ENCODE measurements at regions of chr4 and their contacts with region 1.

Region 1: DNA sequence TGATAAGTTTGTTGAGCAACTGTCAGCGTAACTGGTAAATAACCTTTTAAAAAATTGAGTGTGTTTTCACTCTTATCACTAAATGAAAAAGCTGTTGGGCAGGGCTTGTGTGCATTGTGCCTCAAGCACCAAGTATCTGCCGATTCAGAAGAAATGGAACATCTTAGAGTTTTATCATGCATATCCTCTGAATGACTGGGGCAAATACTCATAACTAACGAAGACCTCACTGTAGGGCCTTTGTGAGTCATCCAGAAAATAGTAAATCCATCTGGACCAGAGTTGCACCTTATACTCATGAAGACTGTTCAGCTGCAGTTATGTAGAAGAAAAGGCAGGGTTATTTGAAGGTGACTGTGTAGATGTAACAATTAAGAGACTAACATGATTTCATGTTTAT is 222.1 kb downstream of the CAMK2D start:
- DNase-seq: peak; percentile 46
- H3K4me3 Mint-ChIP-seq: no peak overlapping the region
- H3K27ac Mint-ChIP-seq: peak overlapping the region; percentile 65
- H3K4me1 Mint-ChIP-seq: peaks cover 38% of the 10 kb centered on the region
- H3K27me3 Mint-ChIP-seq: no peaks in the 10 kb centered on the region

Region 2: GRCh38 chr4:113355550-113356371 is 183.6 kb before region 1 on chr4:
- CTCF ChIA-PET with region 1: no interaction called
- POLR2A ChIA-PET with region 1: interaction called, 4 read pairs
- intact Hi-C with region 1: loop called (anchors 1 kb)
- DNase-seq: peak; percentile 88
- H3K4me3 Mint-ChIP-seq: peak overlapping the region; percentile 36
- H3K27ac Mint-ChIP-seq: peak overlapping the region; percentile 92
- H3K4me1 Mint-ChIP-seq: peaks cover 39% of the 10 kb centered on the region
- H3K27me3 Mint-ChIP-seq: peaks cover 45% of the 10 kb centered on the region

Region 3: DNA sequence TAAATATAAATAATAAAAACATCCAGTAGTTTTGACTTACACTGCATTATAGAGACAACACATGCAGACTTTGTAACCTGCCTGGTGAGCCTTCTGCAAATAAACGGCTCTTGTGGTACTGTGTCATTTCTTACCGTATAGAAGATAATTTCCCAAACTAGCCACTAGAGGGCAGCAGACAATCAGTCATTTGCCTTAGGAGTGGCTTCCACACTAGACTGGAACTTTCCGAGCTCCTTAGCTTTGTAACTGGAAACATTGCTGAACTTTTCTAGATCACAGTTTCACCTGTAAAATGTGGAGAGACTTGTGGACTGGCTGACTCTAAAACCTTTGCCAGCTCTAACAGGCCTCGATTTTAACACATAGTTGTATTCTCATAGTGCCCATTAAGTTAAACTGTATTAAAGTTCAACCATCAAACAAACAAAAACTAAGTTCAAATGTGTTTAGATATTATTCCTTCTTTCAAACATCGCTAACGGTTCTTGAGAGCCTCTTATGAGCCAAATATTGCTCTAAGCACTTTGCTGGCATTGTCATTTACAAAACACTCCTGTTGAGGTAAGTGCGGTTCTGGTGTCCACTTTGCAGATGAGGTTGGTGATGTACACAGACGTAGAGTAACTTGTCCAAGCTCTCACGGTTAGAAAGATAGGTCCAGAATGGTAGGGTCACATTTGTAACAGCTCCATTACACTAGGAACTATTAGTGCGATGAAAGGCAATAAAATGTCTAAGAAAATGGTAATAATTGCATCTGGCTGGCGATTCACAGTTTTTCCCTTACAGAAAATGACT is 144.5 kb before region 1 on chr4:
- CTCF ChIA-PET with region 1: interaction called, 3 read pairs
- POLR2A ChIA-PET with region 1: no interaction called
- intact Hi-C with region 1: loop called (anchors 2 kb)
- DNase-seq: peak; percentile 43
- H3K4me3 Mint-ChIP-seq: no peak overlapping the region
- H3K27ac Mint-ChIP-seq: no peak overlapping the region
- H3K4me1 Mint-ChIP-seq: peaks cover 6% of the 10 kb centered on the region
- H3K27me3 Mint-ChIP-seq: peaks cover 2% of the 10 kb centered on the region

Region 4: DNA sequence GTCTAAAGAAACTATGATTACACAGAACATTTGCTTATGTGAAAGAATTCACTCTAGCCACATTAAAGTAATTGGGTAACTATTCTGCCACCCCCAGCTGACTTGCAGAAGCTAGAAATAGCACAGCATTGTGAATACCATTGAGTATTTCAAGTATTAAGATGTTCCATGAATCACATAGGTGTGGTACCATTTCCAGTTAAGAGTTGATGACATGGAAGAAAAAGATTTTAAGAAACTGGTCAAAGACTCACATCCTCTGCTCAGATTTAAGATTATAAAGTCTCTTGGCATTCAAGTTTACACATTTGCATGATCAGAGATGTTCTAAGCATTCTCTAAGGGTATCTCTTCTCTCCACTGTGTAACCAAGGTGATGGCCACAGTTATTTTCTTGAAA is 65.4 kb before region 1 on chr4:
- CTCF ChIA-PET with region 1: no interaction called
- POLR2A ChIA-PET with region 1: no interaction called
- intact Hi-C with region 1: loop called (anchors 1 kb)
- DNase-seq: peak; percentile 39
- H3K4me3 Mint-ChIP-seq: no peak overlapping the region
- H3K27ac Mint-ChIP-seq: peak overlapping the region; percentile 84
- H3K4me1 Mint-ChIP-seq: peaks cover 51% of the 10 kb centered on the region
- H3K27me3 Mint-ChIP-seq: no peaks in the 10 kb centered on the region

Region 5: DNA sequence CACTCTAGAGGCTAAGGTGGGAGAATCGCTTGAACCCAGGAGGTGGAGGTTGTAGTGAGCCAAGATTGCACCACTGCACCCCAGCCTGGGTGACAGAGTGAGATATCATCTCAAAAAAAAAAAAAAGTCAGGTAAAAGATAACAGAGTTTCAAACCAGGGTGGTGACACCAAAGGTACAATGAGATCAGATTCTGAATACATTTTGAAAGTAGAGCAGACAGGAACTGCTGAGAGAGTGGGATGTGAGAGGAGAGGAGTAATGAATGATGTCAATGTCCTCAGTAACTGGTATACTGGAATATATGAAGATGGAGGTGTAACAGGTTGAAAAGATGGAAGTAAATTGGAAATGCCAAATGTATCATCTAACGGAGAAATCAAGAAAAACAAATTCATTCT is 86.5 kb after region 1 on chr4:
- CTCF ChIA-PET with region 1: no interaction called
- POLR2A ChIA-PET with region 1: no interaction called
- intact Hi-C with region 1: loop called (anchors 1 kb)
- DNase-seq: peak; percentile 36
- H3K4me3 Mint-ChIP-seq: no peak overlapping the region
- H3K27ac Mint-ChIP-seq: peak overlapping the region; percentile 13
- H3K4me1 Mint-ChIP-seq: peaks cover 45% of the 10 kb centered on the region
- H3K27me3 Mint-ChIP-seq: no peaks in the 10 kb centered on the region

Region 6: DNA sequence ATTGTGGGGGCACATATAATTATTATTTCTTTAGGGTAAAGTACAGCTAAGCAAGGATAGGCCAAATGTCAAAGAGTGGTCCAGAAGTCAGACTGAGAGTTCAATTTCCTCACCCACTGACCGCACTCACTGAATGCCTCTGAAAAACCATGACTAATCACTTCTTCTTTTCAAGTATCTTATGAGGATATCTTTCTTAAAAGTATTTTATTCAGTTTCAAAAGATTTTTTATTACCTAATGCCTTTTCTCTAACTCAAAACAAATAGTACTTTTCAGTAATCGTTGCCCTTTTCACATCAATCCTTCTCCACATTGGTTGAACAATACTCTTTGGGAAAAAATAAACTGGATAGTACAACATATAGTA is 283.9 kb after region 1 on chr4:
- CTCF ChIA-PET with region 1: no interaction called
- POLR2A ChIA-PET with region 1: no interaction called
- intact Hi-C with region 1: loop called (anchors 1 kb)
- DNase-seq: peak; percentile 18
- H3K4me3 Mint-ChIP-seq: no peak overlapping the region
- H3K27ac Mint-ChIP-seq: no peak overlapping the region
- H3K4me1 Mint-ChIP-seq: peaks cover 45% of the 10 kb centered on the region
- H3K27me3 Mint-ChIP-seq: no peaks in the 10 kb centered on the region

Measured in activated CD4-positive, alpha-beta memory T cell treated with anti-CD3 and anti-CD28 coated beads for 36 hours (primary cell).